ENCODE measurements at regions of chr2 and their contacts with region 1.

Region 1: GRCh38 chr2:215454519-215455246 is 18.8 kb upstream of the FN1 start:
- DNase-seq: peak in 1 of 2 donors; percentile 56
- ATAC-seq: peak in 1 of 3 donors; percentile 63
- H3K4me3 ChIP-seq: no peak overlapping the region
- H3K4me3 Mint-ChIP-seq: no peak overlapping the region
- H3K27ac ChIP-seq: no peak overlapping the region
- H3K27ac Mint-ChIP-seq: no peak overlapping the region
- H3K4me1 ChIP-seq: no peaks in the 10 kb centered on the region
- H3K4me1 Mint-ChIP-seq: no peaks in the 10 kb centered on the region
- H3K27me3 ChIP-seq: peaks cover 6% of the 10 kb centered on the region
- H3K27me3 Mint-ChIP-seq: peaks cover 21 to 34% of the 10 kb centered on the region in 2 donors
- CTCF ChIP-seq: peak; percentile 88

Region 2: GRCh38 chr2:215828517-215829184 is 374.0 kb after region 1 on chr2:
- intact Hi-C with region 1: loop called (anchors 1 kb)
- DNase-seq: peak; percentile 25 to 63
- ATAC-seq: peak; percentile 63 to 90 (median 70)
- H3K4me3 ChIP-seq: no peak overlapping the region
- H3K4me3 Mint-ChIP-seq: no peak overlapping the region
- H3K27ac ChIP-seq: no peak overlapping the region
- H3K27ac Mint-ChIP-seq: no peak overlapping the region
- H3K4me1 ChIP-seq: peaks cover 3% of the 10 kb centered on the region
- H3K4me1 Mint-ChIP-seq: peaks cover 6 to 7% of the 10 kb centered on the region in 2 donors
- H3K27me3 ChIP-seq: no peaks in the 10 kb centered on the region
- H3K27me3 Mint-ChIP-seq: peaks cover 0 to 9% of the 10 kb centered on the region in 2 donors
- CTCF ChIP-seq: peak; percentile 56

Region 3: DNA sequence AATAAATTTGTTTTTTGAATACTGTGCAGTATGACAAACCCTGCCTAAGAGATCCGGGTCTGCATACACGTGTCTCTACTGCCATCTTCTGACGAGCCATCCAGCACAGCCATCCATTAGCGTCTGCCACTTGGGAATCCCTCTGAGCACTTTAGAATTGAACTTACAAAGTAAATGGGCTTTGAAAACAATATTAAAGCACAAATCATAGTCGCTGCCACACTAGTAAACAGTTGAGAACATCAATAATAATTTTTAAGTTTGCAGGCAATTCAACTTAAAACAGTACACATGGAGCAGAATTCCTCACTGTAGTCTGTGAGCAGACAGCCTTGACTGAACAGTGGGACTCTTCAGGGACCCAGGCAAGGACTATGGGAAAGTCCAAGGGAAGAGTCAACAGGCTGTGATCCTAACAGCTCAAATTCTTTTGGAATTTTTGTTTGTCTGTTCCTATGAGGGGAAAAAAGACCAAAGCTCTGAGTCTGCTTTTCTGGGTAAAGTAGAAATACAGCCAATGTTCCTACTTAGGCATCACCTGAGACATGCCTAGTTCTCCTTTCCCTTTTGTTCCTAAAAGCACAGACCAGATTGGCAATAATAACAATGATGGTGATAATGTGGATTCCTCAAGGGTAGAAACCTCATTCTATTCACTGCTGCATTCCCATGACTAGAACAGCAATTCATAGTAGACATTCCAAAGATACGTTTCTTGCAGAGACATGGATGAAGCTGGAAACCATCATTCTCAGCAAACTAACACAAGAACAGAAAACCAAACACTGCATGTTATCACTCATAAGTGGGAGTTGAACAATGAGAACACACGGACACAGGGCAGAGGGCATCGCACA is 465.8 kb after region 1 on chr2:
- intact Hi-C with region 1: loop called (anchors 1 kb)
- DNase-seq: peak; percentile 27 to 80
- ATAC-seq: peak; percentile 70 to 91 (median 82)
- H3K4me3 ChIP-seq: no peak overlapping the region
- H3K4me3 Mint-ChIP-seq: no peak overlapping the region
- H3K27ac ChIP-seq: no peak overlapping the region
- H3K27ac Mint-ChIP-seq: no peak overlapping the region
- H3K4me1 ChIP-seq: peaks cover 9% of the 10 kb centered on the region
- H3K4me1 Mint-ChIP-seq: peaks cover 14 to 16% of the 10 kb centered on the region in 2 donors
- H3K27me3 ChIP-seq: no peaks in the 10 kb centered on the region
- H3K27me3 Mint-ChIP-seq: peaks cover 2 to 17% of the 10 kb centered on the region in 2 donors
- CTCF ChIP-seq: peak; percentile 70